ENCODE measurements at regions of chr16 and their contacts with region 1.

Region 1: GRCh38 chr16:1308977-1309885 is at the start of gene UBE2I:
- DNase-seq: peak; percentile 97
- H3K4me3 Mint-ChIP-seq: peak within 1 kb of the TSS; percentile 96
- H3K27ac Mint-ChIP-seq: peak within 1 kb of the TSS; percentile 100
- H3K4me1 Mint-ChIP-seq: peaks cover 13% of the 10 kb centered on the region
- H3K27me3 Mint-ChIP-seq: no peaks in the 10 kb centered on the region
- CTCF ChIP-seq: no peak
- total RNA-seq, gene UBE2I: 163 and 172 TPM in 2 replicates

Region 2: DNA sequence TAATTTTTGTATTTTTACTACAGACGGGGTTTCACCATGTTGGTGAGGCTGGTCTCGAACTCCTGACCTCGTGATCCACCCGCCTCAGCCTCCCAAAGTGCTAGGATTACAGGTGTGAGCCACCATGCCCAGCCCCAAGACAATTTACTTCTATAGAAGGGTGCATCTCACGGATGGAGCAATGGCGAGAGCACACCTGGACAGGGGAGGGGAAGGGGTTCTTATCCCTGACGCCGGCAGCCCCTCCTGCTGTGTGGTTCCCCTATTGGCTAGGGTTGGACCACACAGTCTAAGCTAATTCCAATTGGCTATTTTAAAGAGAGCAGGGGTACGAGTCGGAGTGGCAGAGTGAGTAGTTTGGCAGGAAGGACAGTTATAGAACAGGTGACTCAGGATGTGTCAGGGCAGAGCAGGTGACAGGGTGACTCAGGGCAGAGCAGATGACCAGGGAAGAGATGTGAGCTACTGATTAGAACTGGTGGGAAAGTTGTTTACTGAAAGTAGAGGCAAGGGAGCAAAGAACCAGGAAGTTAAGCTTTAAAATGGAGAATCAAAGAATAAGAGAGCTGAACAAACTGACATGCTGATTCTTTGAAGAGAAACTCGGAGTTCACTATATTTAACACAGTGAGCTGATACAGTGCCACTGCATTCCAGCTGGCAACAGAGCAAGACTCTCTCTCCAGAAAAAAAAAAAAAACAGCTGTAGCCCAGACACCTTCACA is 12.4 kb before region 1 on chr16:
- CTCF ChIA-PET with region 1: no interaction called
- POLR2A ChIA-PET with region 1: interaction called, 22 read pairs
- intact Hi-C with region 1: no loop called
- DNase-seq: peak; percentile 65
- H3K4me3 Mint-ChIP-seq: peak overlapping the region; percentile 23
- H3K27ac Mint-ChIP-seq: peak overlapping the region; percentile 93
- H3K4me1 Mint-ChIP-seq: peaks cover 10% of the 10 kb centered on the region
- H3K27me3 Mint-ChIP-seq: no peaks in the 10 kb centered on the region
- CTCF ChIP-seq: no peak

Region 3: DNA sequence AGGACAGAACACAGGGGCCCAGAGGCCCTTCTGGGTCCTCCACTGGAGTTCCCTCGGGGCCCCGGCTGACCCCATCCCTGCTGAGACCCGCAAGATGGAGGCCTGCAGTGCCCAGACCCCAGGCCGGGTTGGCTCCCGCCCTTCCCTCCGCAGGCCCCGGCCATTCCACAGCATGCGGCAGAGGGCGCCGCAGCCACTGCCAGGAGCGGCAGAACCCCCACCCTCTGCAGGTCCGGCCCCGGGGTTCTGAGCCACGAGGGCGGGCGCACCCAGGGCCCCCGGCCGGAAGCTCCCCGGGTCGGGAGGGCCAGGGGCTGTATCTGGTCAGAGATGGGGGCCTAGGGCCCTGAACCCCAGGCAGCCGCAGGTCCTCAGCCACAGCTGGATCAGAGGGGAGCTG is 119.3 kb after region 1 on chr16:
- CTCF ChIA-PET with region 1: no interaction called
- POLR2A ChIA-PET with region 1: no interaction called
- intact Hi-C with region 1: loop called (anchors 10 kb)
- DNase-seq: peak; percentile 68
- H3K4me3 Mint-ChIP-seq: peak overlapping the region; percentile 73
- H3K27ac Mint-ChIP-seq: peak overlapping the region; percentile 86
- H3K4me1 Mint-ChIP-seq: no peaks in the 10 kb centered on the region
- H3K27me3 Mint-ChIP-seq: no peaks in the 10 kb centered on the region
- CTCF ChIP-seq: peak; percentile 59